ENCODE measurements at regions of chr14 and their contacts with region 1.

Region 1: DNA sequence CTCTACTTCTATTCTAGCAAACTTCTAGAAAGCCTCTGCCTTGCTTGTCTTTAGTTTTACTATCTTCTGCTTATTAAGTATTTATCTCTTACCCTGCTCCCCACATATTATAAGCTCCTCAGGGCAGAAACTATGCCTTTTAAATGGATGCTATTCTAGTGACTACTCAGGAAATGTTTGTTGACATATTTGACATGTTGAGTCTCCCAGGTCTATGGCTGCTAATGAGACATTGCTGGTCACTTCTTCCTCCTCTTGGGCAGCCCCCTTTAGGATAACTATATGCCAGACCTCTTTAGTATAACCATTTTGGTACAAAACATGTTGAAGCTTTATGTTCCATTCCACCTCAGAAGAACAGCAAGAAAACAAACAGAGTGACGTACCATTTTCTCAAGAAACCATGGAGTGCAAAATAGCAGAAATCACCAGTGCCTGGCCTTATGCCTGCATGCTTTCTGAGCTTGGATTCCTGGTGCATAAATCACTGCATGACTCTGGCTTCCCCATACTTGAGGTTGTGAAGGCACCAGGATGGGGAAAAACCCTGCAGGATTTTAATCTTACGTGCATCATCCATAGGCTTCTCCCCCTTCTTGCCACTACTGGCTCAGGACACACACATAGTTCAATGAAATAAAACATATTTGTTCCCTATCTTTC is 202.6 kb downstream of the TMX1 start:
- DNase-seq: peak; percentile 64 to 90
- H3K4me3 ChIP-seq: no peak overlapping the region; the same call in 1 of the 2 replicates
- H3K27ac ChIP-seq: peak overlapping the region; percentile 93
- H3K4me1 ChIP-seq: peaks cover 45% of the 10 kb centered on the region
- H3K27me3 ChIP-seq: no peaks in the 10 kb centered on the region
- CTCF ChIP-seq: no peak

Region 2: DNA sequence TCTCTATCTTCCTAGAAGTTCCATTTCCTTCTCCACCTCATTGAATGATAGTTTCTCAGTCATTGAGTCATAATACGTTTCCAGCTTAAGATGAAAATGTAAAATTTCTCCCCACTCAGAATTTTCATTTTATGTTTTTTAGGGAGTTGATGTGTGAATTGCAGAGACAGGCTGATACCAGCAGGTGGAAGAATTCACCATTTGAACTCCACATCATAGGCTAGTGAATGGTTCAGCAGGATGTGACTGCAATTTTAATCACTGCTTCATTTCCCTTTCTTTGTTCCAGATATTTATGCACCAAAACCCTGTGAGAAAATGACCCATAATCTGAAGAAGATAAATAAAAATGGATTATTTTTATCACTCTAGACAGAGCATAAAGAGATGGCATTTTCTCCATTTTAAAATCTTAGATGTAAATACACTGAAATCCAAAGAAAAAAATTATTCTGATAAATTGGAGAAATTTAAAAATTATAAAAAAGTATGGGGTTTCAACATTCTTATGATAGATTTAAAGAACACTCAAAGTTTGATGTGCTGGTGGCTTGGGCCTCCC is 487.8 kb before region 1 on chr14:
- CTCF ChIA-PET with region 1: no interaction called
- POLR2A ChIA-PET with region 1: no interaction called
- intact Hi-C with region 1: no loop called
- DNase-seq: peak; percentile 12 to 52
- H3K4me3 ChIP-seq: peak overlapping the region; percentile 9; the same call in 1 of the 2 replicates
- H3K27ac ChIP-seq: peak overlapping the region; percentile 84
- H3K4me1 ChIP-seq: peaks cover 31% of the 10 kb centered on the region
- H3K27me3 ChIP-seq: no peaks in the 10 kb centered on the region
- CTCF ChIP-seq: peak; percentile 75

Region 3: GRCh38 chr14:51482102-51482501 is 39.5 kb after region 1 on chr14:
- CTCF ChIA-PET with region 1: no interaction called
- POLR2A ChIA-PET with region 1: interaction called, 10 read pairs
- intact Hi-C with region 1: no loop called
- DNase-seq: no peak
- H3K4me3 ChIP-seq: no peak overlapping the region
- H3K27ac ChIP-seq: no peak overlapping the region
- H3K4me1 ChIP-seq: no peaks in the 10 kb centered on the region
- H3K27me3 ChIP-seq: no peaks in the 10 kb centered on the region
- CTCF ChIP-seq: no peak

Region 4: DNA sequence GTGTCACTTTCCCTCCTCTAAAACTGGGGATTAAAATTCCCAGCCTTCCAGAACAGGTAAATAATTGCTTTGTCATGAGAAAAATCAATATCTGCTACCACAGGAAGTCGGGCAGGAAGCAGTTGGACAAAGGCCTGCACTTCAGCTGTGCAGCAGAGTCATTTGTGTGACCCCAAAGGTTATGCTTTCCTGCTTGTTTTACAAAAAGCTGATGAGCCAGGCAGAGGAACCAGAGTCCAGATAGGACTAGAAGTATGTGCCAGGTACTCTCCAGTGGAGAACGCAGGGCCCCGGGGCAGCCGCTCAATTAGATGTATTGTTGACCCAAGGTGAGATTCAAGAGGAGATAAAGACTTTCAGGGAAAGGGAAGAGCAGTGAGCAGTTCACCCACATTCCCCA is 92.0 kb after region 1 on chr14:
- CTCF ChIA-PET with region 1: no interaction called
- POLR2A ChIA-PET with region 1: no interaction called
- intact Hi-C with region 1: loop called (anchors 2 kb)
- DNase-seq: peak; percentile 87 to 98
- H3K4me3 ChIP-seq: no peak overlapping the region
- H3K27ac ChIP-seq: peak overlapping the region; percentile 99
- H3K4me1 ChIP-seq: peaks cover 54% of the 10 kb centered on the region
- H3K27me3 ChIP-seq: no peaks in the 10 kb centered on the region
- CTCF ChIP-seq: no peak

Region 5: GRCh38 chr14:51547260-51547659 is 104.6 kb after region 1 on chr14:
- CTCF ChIA-PET with region 1: no interaction called
- POLR2A ChIA-PET with region 1: no interaction called
- intact Hi-C with region 1: loop called (anchors 5 kb)
- DNase-seq: peak; percentile 57 to 93
- H3K4me3 ChIP-seq: no peak overlapping the region
- H3K27ac ChIP-seq: peak overlapping the region; percentile 84
- H3K4me1 ChIP-seq: peaks cover 34% of the 10 kb centered on the region
- H3K27me3 ChIP-seq: no peaks in the 10 kb centered on the region
- CTCF ChIP-seq: no peak

Measured in PC-9 (cell line).